IMR-90 (cell line): ENCODE measurements at regions of chr1 and their contacts with region 1.

Region 1: GRCh38 chr1:148353461-148354283 is 129.4 kb downstream of the PPIAL4G start:
- DNase-seq: peak; percentile 60
- ATAC-seq: peak; percentile 81
- H3K4me3 ChIP-seq: no peak overlapping the region
- H3K27ac ChIP-seq: no peak overlapping the region
- H3K4me1 ChIP-seq: no peaks in the 10 kb centered on the region
- H3K27me3 ChIP-seq: peaks cover 48% of the 10 kb centered on the region
- CTCF ChIP-seq: no peak
- POLR2A ChIP-seq: no peak
- RAD21 ChIP-seq: no peak

Region 2: GRCh38 chr1:147287133-147287865 is 1066.4 kb before region 1 on chr1:
- CTCF ChIA-PET with region 1: no interaction called
- POLR2A ChIA-PET with region 1: no interaction called
- dilution Hi-C with region 1: no loop called
- in situ Hi-C with region 1: no loop called
- intact Hi-C with region 1: no loop called
- DNase-seq: peak; percentile 51
- ATAC-seq: no peak
- H3K4me3 ChIP-seq: no peak overlapping the region
- H3K27ac ChIP-seq: no peak overlapping the region
- H3K4me1 ChIP-seq: peaks cover 4% of the 10 kb centered on the region
- H3K27me3 ChIP-seq: no peaks in the 10 kb centered on the region
- CTCF ChIP-seq: no peak
- POLR2A ChIP-seq: no peak
- RAD21 ChIP-seq: no peak

Region 3: GRCh38 chr1:148290881-148291280 is 62.8 kb before region 1 on chr1:
- CTCF ChIA-PET with region 1: no interaction called
- POLR2A ChIA-PET with region 1: no interaction called
- dilution Hi-C with region 1: no loop called
- in situ Hi-C with region 1: loop called (anchors 10 kb)
- intact Hi-C with region 1: no loop called
- DNase-seq: no peak
- ATAC-seq: no peak
- H3K4me3 ChIP-seq: no peak overlapping the region
- H3K27ac ChIP-seq: no peak overlapping the region
- H3K4me1 ChIP-seq: no peaks in the 10 kb centered on the region
- H3K27me3 ChIP-seq: no peaks in the 10 kb centered on the region; the same call in 1 of the 2 replicates
- CTCF ChIP-seq: no peak
- POLR2A ChIP-seq: no peak
- RAD21 ChIP-seq: no peak